ENCODE measurements at regions of chr22 and their contacts with region 1.

Region 1: GRCh38 chr22:33057363-33057995 is 702 bp downstream of the SYN3 start:
- DNase-seq: no peak

Region 2: GRCh38 chr22:33044112-33044511 is 13.4 kb before region 1 on chr22:
- CTCF ChIA-PET with region 1: interaction called, 15 read pairs
- POLR2A ChIA-PET with region 1: interaction called, 9 read pairs
- DNase-seq: no peak

Measured in HEK293T (cell line).